Activated CD4-positive, alpha-beta memory T cell treated with anti-CD3 and anti-CD28 coated beads for 36 hours (primary cell): ENCODE measurements at regions of chr20 and their contacts with region 1.

Region 1: DNA sequence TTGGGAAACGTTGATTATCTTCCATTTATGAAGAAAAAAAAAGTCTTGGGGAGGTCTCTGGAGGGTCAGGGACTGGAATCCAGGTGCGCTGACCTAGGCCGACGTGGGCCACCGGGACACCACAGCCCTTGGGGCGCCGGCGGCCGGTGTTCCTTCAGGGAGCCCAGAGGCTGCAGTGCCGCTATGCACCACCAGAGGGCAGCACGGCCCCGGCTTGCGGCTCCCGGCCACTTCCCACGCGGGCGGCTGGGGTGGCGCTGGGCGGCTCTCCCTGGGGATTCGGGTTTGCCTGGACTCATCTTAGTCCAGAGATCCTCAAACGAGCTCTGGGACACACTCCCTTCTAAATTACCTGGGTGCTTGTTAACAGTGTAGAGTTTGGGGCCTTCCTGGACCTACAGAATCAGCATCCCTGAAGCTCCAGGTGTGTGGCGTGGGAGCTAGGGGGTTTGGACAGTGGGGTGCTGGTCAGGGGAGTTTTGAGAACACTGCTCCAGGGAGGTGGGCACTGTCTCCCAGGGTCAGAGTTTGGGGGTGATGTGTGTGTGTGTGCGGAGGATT is 23.0 kb upstream of the GTSF1L start:
- DNase-seq: peak; percentile 88
- H3K4me3 Mint-ChIP-seq: no peak overlapping the region
- H3K27ac Mint-ChIP-seq: peak overlapping the region; percentile 55
- H3K4me1 Mint-ChIP-seq: peaks cover 42% of the 10 kb centered on the region
- H3K27me3 Mint-ChIP-seq: peaks cover 18% of the 10 kb centered on the region

Region 2: GRCh38 chr20:43824309-43825050 is 74.7 kb after region 1 on chr20:
- CTCF ChIA-PET with region 1: interaction called, 7 read pairs
- POLR2A ChIA-PET with region 1: no interaction called
- intact Hi-C with region 1: loop called (anchors 1 kb)
- DNase-seq: no peak
- H3K4me3 Mint-ChIP-seq: no peak overlapping the region
- H3K27ac Mint-ChIP-seq: no peak overlapping the region
- H3K4me1 Mint-ChIP-seq: peaks cover 10% of the 10 kb centered on the region
- H3K27me3 Mint-ChIP-seq: peaks cover 10% of the 10 kb centered on the region

Region 3: GRCh38 chr20:43914311-43915210 is 164.7 kb after region 1 on chr20 and contains the start of gene TOX2:
- CTCF ChIA-PET with region 1: interaction called, 4 read pairs
- POLR2A ChIA-PET with region 1: no interaction called
- intact Hi-C with region 1: loop called (anchors 2 kb)
- DNase-seq: peak; percentile 48
- H3K4me3 Mint-ChIP-seq: peak within 1 kb of the TSS; percentile 78
- H3K27ac Mint-ChIP-seq: peak within 1 kb of the TSS; percentile 43
- H3K4me1 Mint-ChIP-seq: peaks cover 39% of the 10 kb centered on the region
- H3K27me3 Mint-ChIP-seq: peaks cover 44% of the 10 kb centered on the region
- total RNA-seq, gene TOX2: 2.2 to 2.5 TPM

Region 4: GRCh38 chr20:43983359-43983758 is 233.5 kb after region 1 on chr20:
- CTCF ChIA-PET with region 1: interaction called, 24 read pairs
- POLR2A ChIA-PET with region 1: no interaction called
- intact Hi-C with region 1: no loop called
- DNase-seq: peak; percentile 68
- H3K4me3 Mint-ChIP-seq: no peak overlapping the region
- H3K27ac Mint-ChIP-seq: no peak overlapping the region
- H3K4me1 Mint-ChIP-seq: peaks cover 14% of the 10 kb centered on the region
- H3K27me3 Mint-ChIP-seq: peaks cover 2% of the 10 kb centered on the region

Region 5: DNA sequence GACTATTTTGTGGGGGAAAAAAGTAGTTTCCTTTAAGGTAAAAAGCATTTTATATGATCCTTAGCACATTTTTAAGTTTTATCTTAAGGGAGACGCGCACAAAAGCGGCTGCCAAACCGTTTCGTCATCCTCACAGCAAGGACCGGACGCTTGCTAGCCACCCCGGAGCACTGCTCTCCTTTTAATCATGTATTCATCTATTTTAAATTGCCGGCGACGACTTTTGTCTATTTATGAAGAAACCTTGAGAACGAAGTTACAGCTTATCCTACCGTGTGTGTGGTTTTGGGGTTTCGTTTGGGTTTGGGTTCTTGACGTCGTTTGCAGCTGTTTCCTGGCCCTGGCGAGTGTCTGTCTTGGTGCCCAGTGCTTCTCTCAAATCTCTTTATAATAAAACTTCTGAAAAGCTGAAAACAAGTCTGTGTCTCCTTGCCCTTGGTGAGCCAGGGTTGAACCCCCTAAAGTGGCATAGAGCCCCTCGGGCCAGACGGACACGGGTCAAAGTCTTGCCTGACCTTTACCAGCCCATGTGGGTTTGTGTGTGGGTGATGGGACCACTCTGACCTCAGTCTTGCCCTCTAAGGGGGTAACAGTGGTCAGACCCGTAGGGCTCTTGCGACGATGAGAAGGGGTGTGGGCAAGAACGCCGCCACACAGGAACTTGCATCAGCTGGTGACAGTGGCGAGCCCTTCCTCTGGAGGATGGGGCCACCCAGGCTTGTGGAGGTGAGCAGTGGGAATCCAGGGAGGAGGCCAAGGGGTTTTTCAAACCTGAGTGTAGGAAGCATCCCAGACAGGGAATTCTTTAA is 319.6 kb after region 1 on chr20:
- CTCF ChIA-PET with region 1: interaction called, 12 read pairs
- POLR2A ChIA-PET with region 1: interaction called, 3 read pairs
- intact Hi-C with region 1: loop called (anchors 1 kb)
- DNase-seq: peak; percentile 74
- H3K4me3 Mint-ChIP-seq: peak overlapping the region; percentile 65
- H3K27ac Mint-ChIP-seq: peak overlapping the region; percentile 84
- H3K4me1 Mint-ChIP-seq: peaks cover 50% of the 10 kb centered on the region
- H3K27me3 Mint-ChIP-seq: no peaks in the 10 kb centered on the region

Region 6: DNA sequence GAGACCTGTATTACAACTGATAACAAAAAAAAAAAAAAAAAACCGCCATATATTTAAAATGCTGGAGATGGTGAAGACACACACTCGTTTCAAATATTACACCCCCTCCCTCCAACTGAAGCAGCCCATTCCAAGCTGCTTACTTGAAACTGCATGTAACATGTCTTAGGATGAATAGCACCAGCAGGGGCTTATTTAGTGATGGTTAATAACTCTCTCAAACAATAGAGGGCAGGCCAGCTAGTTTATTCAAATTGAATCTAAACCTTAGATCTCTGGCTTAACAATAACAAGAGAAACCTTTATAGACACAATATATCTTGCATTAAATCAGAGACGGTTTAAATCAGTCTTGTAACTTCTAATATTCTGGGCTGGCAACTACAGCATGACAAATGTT is 446.5 kb after region 1 on chr20:
- CTCF ChIA-PET with region 1: interaction called, 10 read pairs
- POLR2A ChIA-PET with region 1: no interaction called
- intact Hi-C with region 1: loop called (anchors 10 kb)
- DNase-seq: no peak
- H3K4me3 Mint-ChIP-seq: no peak overlapping the region
- H3K27ac Mint-ChIP-seq: no peak overlapping the region
- H3K4me1 Mint-ChIP-seq: peaks cover 18% of the 10 kb centered on the region
- H3K27me3 Mint-ChIP-seq: no peaks in the 10 kb centered on the region